Transverse colon (tissue), 4 donors: ENCODE measurements at regions of chr6 and their contacts with region 1.

Region 1: DNA sequence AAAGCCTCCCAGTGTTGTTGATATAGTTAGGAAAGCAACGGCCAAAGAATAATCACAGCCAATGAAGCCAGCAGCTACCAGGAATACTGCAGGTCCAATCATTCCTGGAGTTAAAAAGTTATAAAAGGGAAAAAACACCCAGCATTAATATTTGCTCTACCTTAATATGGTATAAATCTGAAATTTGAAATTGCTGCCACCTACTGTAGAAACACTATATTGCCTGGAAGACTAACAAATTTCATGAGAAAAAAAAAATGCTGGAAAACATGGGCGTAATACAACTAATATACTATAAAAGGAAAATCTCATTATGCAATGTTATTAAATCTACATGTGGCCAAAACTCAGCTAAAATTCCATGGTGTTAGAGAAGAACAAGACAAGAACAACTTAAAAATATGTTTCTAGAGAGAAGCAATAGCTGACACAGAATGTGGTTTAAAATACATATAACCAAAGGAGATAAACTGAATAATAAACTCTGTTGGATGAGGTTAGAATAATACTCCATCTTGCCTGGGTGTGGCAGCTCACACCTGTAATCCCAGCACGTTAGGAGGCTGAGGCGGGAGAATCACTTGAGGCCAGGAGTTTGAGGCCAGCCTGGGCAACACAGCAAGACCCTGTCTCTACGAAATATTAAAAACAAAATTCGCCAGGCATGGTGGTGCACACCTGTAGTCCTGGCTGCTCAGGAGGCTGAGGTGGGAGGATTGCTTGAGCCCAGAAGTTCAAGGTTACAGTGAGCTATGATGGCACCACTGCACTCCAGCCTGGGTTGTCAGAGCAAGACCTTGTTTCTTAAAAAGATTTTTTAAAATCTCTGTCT is 43.1 kb downstream of the SLC17A5 start:
- DNase-seq: no peak
- H3K4me3 ChIP-seq: no peak overlapping the region
- H3K27ac ChIP-seq: no peak overlapping the region
- H3K4me1 ChIP-seq: peaks cover 0 to 6% (median 0%) of the 10 kb centered on the region in 4 donors
- H3K27me3 ChIP-seq: no peaks in the 10 kb centered on the region
- CTCF ChIP-seq: peak; percentile 60 to 79 (median 71)
- EP300 ChIP-seq: no peak
- POLR2A ChIP-seq: no peak

Region 2: GRCh38 chr6:73461537-73462350 is 148.9 kb before region 1 on chr6 and contains the start of gene MTO1:
- in situ Hi-C with region 1: no loop called
- intact Hi-C with region 1: no loop called
- DNase-seq: peak; percentile 91
- H3K4me3 ChIP-seq: peak within 1 kb of the TSS; percentile 53 to 80 (median 72)
- H3K27ac ChIP-seq: peak within 1 kb of the TSS; percentile 91 to 97 (median 92)
- H3K4me1 ChIP-seq: peaks cover 0 to 35% (median 16%) of the 10 kb centered on the region in 4 donors
- H3K27me3 ChIP-seq: no peaks in the 10 kb centered on the region
- CTCF ChIP-seq: no peak
- EP300 ChIP-seq: no peak
- POLR2A ChIP-seq: peak; percentile 65
- total RNA-seq, gene MTO1: 9.6 to 27.7 (median 22.2) TPM

Region 3: GRCh38 chr6:73514746-73515110 is 95.9 kb before region 1 on chr6:
- in situ Hi-C with region 1: loop called (anchors 5 to 25 kb)
- intact Hi-C with region 1: loop called (anchors 2 kb)
- DNase-seq: no peak
- H3K4me3 ChIP-seq: no peak overlapping the region
- H3K27ac ChIP-seq: peak overlapping the region; percentile 61 to 71 (median 64)
- H3K4me1 ChIP-seq: peaks cover 19 to 46% (median 26%) of the 10 kb centered on the region in 4 donors
- H3K27me3 ChIP-seq: no peaks in the 10 kb centered on the region
- CTCF ChIP-seq: no peak
- EP300 ChIP-seq: no peak
- POLR2A ChIP-seq: no peak